CD8-positive, alpha-beta memory T cell (primary cell): ENCODE measurements at regions of chr19 and their contacts with region 1.

Region 1: GRCh38 chr19:19488875-19489690 is 26.3 kb downstream of the TSSK6 start:
- DNase-seq: peak; percentile 82 to 96 (median 91)
- H3K4me3 ChIP-seq: peak overlapping the region; percentile 40
- H3K4me3 Mint-ChIP-seq: peak overlapping the region; percentile 62 to 88 (median 76)
- H3K27ac ChIP-seq: peak overlapping the region; percentile 89
- H3K27ac Mint-ChIP-seq: peak overlapping the region; percentile 96 to 100 (median 99)
- H3K4me1 ChIP-seq: peaks cover 61% of the 10 kb centered on the region
- H3K4me1 Mint-ChIP-seq: peaks cover 36 to 65% (median 36%) of the 10 kb centered on the region in 3 donors
- H3K27me3 ChIP-seq: no peaks in the 10 kb centered on the region
- H3K27me3 Mint-ChIP-seq: peaks cover 0 to 3% of the 10 kb centered on the region in 2 donors

Region 2: GRCh38 chr19:19366612-19367396 is 122.3 kb before region 1 on chr19:
- CTCF ChIA-PET with region 1: interaction called, 166 read pairs
- POLR2A ChIA-PET with region 1: interaction called, 26 read pairs
- DNase-seq: peak; percentile 48 to 79 (median 61)
- H3K4me3 ChIP-seq: no peak overlapping the region
- H3K4me3 Mint-ChIP-seq: peak overlapping the region; percentile 37 to 74 (median 52)
- H3K27ac ChIP-seq: no peak overlapping the region
- H3K27ac Mint-ChIP-seq: peak overlapping the region in 7 of 8 donors; percentile 15 to 91 (median 85)
- H3K4me1 ChIP-seq: peaks cover 26% of the 10 kb centered on the region
- H3K4me1 Mint-ChIP-seq: peaks cover 13 to 20% (median 19%) of the 10 kb centered on the region in 3 donors
- H3K27me3 ChIP-seq: no peaks in the 10 kb centered on the region
- H3K27me3 Mint-ChIP-seq: no peaks in the 10 kb centered on the region

Region 3: GRCh38 chr19:19385108-19385899 is 103.8 kb before region 1 on chr19:
- CTCF ChIA-PET with region 1: interaction called, 16 read pairs
- POLR2A ChIA-PET with region 1: interaction called, 17 read pairs
- DNase-seq: peak in 4 of 5 donors; percentile 98 to 100 (median 99)
- H3K4me3 ChIP-seq: peak overlapping the region; percentile 74
- H3K4me3 Mint-ChIP-seq: peak overlapping the region; percentile 86 to 96 (median 92)
- H3K27ac ChIP-seq: peak overlapping the region; percentile 90
- H3K27ac Mint-ChIP-seq: peak overlapping the region; percentile 84 to 96 (median 92)
- H3K4me1 ChIP-seq: peaks cover 47% of the 10 kb centered on the region
- H3K4me1 Mint-ChIP-seq: peaks cover 39 to 40% (median 40%) of the 10 kb centered on the region in 3 donors
- H3K27me3 ChIP-seq: no peaks in the 10 kb centered on the region
- H3K27me3 Mint-ChIP-seq: no peaks in the 10 kb centered on the region

Region 4: GRCh38 chr19:19459707-19460251 is 29.3 kb before region 1 on chr19:
- CTCF ChIA-PET with region 1: interaction called, 18 read pairs
- POLR2A ChIA-PET with region 1: interaction called, 4 read pairs
- DNase-seq: peak; percentile 55 to 83 (median 67)
- H3K4me3 ChIP-seq: peak overlapping the region; percentile 52
- H3K4me3 Mint-ChIP-seq: peak overlapping the region; percentile 85 to 93 (median 89)
- H3K27ac ChIP-seq: peak overlapping the region; percentile 82
- H3K27ac Mint-ChIP-seq: peak overlapping the region; percentile 97 to 100 (median 99)
- H3K4me1 ChIP-seq: peaks cover 90% of the 10 kb centered on the region
- H3K4me1 Mint-ChIP-seq: peaks cover 75 to 92% (median 77%) of the 10 kb centered on the region in 3 donors
- H3K27me3 ChIP-seq: no peaks in the 10 kb centered on the region
- H3K27me3 Mint-ChIP-seq: no peaks in the 10 kb centered on the region

Region 5: GRCh38 chr19:19531951-19532805 is 43.1 kb after region 1 on chr19:
- CTCF ChIA-PET with region 1: no interaction called
- POLR2A ChIA-PET with region 1: no interaction called
- DNase-seq: peak; percentile 74 to 87 (median 82)
- H3K4me3 ChIP-seq: no peak overlapping the region
- H3K4me3 Mint-ChIP-seq: no peak overlapping the region
- H3K27ac ChIP-seq: no peak overlapping the region
- H3K27ac Mint-ChIP-seq: peak overlapping the region; percentile 47 to 97 (median 64)
- H3K4me1 ChIP-seq: peaks cover 9% of the 10 kb centered on the region
- H3K4me1 Mint-ChIP-seq: peaks cover 5 to 14% (median 5%) of the 10 kb centered on the region in 3 donors
- H3K27me3 ChIP-seq: no peaks in the 10 kb centered on the region
- H3K27me3 Mint-ChIP-seq: no peaks in the 10 kb centered on the region